ENCODE measurements at regions of chr13 and their contacts with region 1.

Region 1: GRCh38 chr13:36736119-36736726 is 62.4 kb downstream of the SERTM1 start:
- DNase-seq: peak in 1 of 2 donors; percentile 51
- ATAC-seq: no peak
- H3K4me3 ChIP-seq: no peak overlapping the region
- H3K27ac ChIP-seq: no peak overlapping the region
- H3K4me1 ChIP-seq: no peaks in the 10 kb centered on the region
- H3K27me3 ChIP-seq: no peaks in the 10 kb centered on the region

Region 2: DNA sequence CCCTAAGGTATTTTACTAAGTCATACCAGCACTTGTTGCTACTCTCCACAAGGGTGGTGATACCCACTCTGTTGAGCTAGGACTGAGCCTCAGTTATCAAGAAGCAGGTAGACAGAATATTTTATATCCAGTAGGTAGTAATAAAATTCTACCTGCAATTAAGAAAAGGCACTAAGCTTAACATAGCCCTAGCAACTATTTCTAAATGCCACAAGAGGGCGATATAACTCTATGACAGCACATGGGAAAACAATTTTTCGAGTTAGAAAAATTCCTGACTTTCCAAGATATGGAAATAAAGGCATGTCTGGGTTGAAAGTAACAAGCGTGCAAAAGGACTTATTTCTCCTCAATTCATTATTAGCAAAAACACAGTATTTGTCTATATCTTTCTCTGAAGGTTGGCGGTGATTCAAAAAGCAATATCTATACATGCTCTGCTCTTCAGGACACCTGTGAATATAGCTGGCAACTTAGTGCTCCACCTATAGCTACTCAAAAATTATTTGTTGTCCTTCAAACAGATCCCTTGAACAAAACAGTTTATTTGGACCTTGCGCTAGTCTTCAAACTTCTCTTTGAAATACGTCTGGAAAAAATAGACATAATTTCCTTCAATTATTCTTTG is 453.3 kb before region 1 on chr13:
- intact Hi-C with region 1: loop called (anchors 5 kb)
- DNase-seq: no peak
- ATAC-seq: peak; percentile 46
- H3K4me3 ChIP-seq: no peak overlapping the region
- H3K27ac ChIP-seq: no peak overlapping the region
- H3K4me1 ChIP-seq: no peaks in the 10 kb centered on the region
- H3K27me3 ChIP-seq: no peaks in the 10 kb centered on the region

Region 3: DNA sequence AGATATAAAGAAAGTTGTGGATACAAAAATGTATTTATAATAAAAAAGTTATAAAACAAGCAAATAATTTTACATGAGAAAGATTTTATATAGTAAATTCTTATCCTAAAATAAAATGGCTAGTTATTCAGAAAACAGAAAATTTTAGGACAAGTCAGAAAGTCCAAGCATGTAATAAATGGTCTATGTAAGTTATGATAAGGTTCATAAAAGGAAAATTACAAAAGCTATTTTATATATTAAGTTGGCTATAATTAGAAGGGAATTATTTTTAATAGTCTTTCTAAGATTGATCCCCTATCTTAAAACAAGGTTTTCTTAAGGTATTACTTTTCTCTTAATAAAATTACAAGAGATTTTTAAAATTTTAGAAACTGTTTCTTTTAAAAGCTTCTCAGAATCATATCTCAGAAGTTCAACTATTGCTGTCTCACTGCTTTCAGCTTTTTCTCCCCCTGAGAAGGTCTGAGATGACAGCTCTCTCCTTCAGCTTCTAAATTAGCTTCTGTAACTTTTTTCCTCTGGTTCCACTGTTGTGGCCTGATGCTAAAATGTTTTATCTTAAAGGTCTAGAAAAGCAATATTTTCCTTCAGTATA is 447.3 kb before region 1 on chr13:
- intact Hi-C with region 1: loop called (anchors 5 kb)
- DNase-seq: no peak
- ATAC-seq: no peak
- H3K4me3 ChIP-seq: no peak overlapping the region
- H3K27ac ChIP-seq: no peak overlapping the region
- H3K4me1 ChIP-seq: no peaks in the 10 kb centered on the region
- H3K27me3 ChIP-seq: no peaks in the 10 kb centered on the region

Region 4: GRCh38 chr13:36420437-36420891 is 315.8 kb before region 1 on chr13:
- intact Hi-C with region 1: loop called (anchors 5 kb)
- DNase-seq: peak; percentile 72 to 83
- ATAC-seq: peak; percentile 89
- H3K4me3 ChIP-seq: no peak overlapping the region
- H3K27ac ChIP-seq: no peak overlapping the region
- H3K4me1 ChIP-seq: no peaks in the 10 kb centered on the region
- H3K27me3 ChIP-seq: no peaks in the 10 kb centered on the region

Region 5: DNA sequence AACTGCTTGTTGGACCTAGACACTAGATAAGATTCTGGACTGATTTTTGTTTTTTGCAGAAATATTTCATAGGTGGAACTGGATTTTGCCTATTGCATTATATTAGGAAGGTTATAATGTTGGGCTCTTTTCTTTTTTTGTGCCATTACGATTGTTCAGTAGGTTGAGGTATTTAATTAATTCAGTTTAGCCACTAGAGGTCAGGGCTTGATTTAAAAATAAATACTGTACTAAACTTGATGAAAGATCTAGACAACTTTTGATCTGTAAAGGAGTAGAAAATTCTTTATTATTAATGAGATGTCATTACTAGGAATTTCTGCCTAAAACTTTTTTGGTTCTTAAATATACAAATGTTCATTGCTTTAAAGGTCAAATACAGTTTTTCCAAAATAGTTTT is 338.5 kb after region 1 on chr13:
- intact Hi-C with region 1: no loop called
- DNase-seq: no peak
- ATAC-seq: no peak
- H3K4me3 ChIP-seq: no peak overlapping the region
- H3K27ac ChIP-seq: no peak overlapping the region
- H3K4me1 ChIP-seq: no peaks in the 10 kb centered on the region
- H3K27me3 ChIP-seq: no peaks in the 10 kb centered on the region

Measured in aorta (tissue), 5 donors.